A549 (cell line): ENCODE measurements at regions of chr3 and their contacts with region 1.

Region 1: DNA sequence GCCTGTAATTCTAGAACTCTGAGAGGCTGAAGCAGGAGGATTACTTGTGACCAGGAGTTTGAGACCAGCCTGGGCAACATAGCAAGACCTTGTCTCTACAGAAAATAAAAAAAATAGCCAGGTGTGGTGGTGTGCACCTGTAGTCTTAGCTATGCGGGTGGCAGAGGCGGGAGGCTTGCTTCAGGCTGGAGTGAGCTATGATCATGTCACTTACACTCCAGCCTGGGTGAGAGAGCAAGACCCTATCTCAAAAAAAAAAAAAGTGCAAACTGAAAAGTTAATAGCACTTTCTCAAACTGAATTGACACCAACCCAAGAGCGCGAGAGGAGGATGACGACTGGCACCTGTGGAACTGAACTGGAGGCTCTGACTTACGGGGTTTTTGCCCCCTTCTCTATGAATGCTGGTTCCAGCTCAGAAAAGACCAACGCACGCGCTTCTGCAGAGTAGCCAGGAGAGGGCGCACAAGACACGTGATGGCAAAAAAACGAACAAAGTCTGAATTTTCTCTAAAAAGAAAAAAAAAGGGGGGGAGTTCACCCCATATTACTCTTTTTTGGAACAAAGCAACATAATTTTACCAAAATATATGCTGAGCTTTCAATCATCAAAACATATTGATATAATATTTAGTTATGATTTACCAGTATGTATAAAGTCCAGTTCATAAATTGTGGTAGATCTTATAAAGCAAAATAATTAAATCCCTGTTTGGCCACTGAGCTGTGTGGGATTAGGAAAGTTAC is 23.7 kb downstream of the CFAP92 start:
- DNase-seq: peak in 1 of 2 experiments; percentile 37
- ATAC-seq: peak; percentile 62 to 78; a peak in 4 of 6 replicates
- H3K4me3 ChIP-seq: no peak overlapping the region
- H3K27ac ChIP-seq: no peak overlapping the region
- H3K4me1 ChIP-seq: no peaks in the 10 kb centered on the region
- CTCF ChIP-seq: peak; percentile 82
- EP300 ChIP-seq: no peak
- POLR2A ChIP-seq: no peak
- RAD21 ChIP-seq: peak; percentile 82 to 84

Region 2: DNA sequence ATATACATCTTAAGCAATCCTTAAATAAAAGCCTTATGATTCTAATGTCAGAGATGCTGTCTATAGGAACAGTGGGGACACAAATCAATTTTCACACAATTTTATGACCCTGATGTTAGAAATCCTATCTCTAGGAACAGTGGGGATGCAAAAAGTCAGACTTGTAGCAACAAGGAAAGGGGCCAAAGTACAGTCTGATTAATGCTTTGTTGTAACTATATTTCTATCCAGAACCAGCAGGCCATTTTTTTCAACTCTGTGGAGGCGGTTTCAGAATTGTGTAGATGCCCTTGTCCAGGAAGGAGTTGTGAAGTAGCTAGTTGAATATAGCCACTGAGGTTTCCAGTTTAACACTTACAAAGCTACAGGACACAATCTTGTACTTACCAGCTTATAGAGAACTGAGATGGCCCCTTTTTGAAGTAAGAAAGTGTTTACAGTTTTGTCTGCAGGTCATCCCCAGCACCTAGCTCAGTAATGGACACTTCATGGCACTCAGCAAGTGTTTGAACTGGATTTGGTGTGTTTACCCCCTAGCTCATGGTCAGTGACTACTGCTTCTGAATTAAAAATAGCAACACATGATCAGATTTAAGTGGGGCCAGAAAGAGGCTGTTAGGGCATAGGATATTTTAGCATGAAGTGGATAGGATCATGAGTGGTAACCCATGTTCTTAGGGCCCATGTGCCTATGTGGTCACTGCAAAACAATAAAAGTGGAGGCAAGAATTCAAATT is 189.9 kb before region 1 on chr3:
- CTCF ChIA-PET with region 1: no interaction called
- POLR2A ChIA-PET with region 1: no interaction called
- DNase-seq: no peak
- ATAC-seq: no peak
- H3K4me3 ChIP-seq: no peak overlapping the region
- H3K27ac ChIP-seq: no peak overlapping the region
- H3K4me1 ChIP-seq: peaks cover 44% of the 10 kb centered on the region
- CTCF ChIP-seq: no peak
- EP300 ChIP-seq: no peak
- POLR2A ChIP-seq: no peak
- RAD21 ChIP-seq: no peak

Region 3: GRCh38 chr3:128895843-128896697 is 74.1 kb before region 1 on chr3:
- CTCF ChIA-PET with region 1: no interaction called
- POLR2A ChIA-PET with region 1: no interaction called
- DNase-seq: no peak
- ATAC-seq: no peak
- H3K4me3 ChIP-seq: no peak overlapping the region
- H3K27ac ChIP-seq: peak overlapping the region in 1 of 2 experiments; percentile 45; a peak in 2 of 6 replicates
- H3K4me1 ChIP-seq: peaks cover 5% of the 10 kb centered on the region; the same call in 2 of the 3 replicates
- CTCF ChIP-seq: no peak
- EP300 ChIP-seq: no peak
- POLR2A ChIP-seq: no peak
- RAD21 ChIP-seq: no peak

Region 4: DNA sequence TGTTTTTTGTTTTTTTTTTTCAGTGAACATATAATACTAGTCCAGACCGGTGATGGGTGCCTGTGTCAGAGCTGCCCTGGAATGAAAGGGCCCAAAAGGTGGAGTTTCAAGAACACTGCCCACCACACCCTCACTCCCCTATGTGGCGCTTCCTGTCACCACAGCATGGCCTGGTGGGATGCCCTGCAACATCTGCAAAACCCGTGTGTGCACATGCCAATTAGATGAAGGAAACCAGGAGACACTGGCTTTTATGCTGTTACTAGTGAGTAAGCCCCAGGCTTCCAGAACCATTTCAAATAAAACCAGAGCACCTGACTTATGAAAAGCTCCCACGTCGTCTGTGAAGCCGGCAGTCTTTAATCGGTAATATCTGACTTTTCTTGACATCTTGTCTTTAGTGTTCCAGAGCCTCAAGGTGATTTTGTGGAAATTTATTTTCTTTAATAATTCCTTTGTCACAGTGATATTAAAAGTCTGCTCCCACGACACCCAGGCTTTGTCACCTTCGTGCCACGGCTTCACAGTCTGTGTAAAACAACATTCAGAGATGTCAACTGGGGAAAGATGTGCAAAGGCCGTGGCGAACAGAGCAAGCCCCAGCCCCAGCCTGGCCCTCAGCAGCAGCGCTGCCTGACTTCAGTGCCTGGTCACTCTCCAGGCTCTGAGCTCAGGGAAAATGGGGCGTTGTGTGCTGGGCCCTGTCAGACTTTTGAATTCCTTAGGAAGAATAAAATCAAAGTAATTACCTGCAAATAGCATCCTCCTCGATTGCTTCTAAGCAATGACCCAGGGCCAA is 17.3 kb after region 1 on chr3:
- CTCF ChIA-PET with region 1: interaction called, 27 read pairs
- POLR2A ChIA-PET with region 1: no interaction called
- DNase-seq: no peak
- ATAC-seq: no peak
- H3K4me3 ChIP-seq: no peak overlapping the region
- H3K27ac ChIP-seq: no peak overlapping the region
- H3K4me1 ChIP-seq: no peaks in the 10 kb centered on the region
- CTCF ChIP-seq: no peak
- EP300 ChIP-seq: no peak
- POLR2A ChIP-seq: no peak
- RAD21 ChIP-seq: no peak

Region 5: GRCh38 chr3:129016356-129016719 is 46.2 kb after region 1 on chr3:
- CTCF ChIA-PET with region 1: interaction called, 18 read pairs
- POLR2A ChIA-PET with region 1: no interaction called
- DNase-seq: no peak
- ATAC-seq: peak in 1 of 2 experiments; percentile 48; a peak in 2 of 6 replicates
- H3K4me3 ChIP-seq: no peak overlapping the region
- H3K27ac ChIP-seq: peak overlapping the region; percentile 56 to 75
- H3K4me1 ChIP-seq: peaks cover 16% of the 10 kb centered on the region
- CTCF ChIP-seq: no peak
- EP300 ChIP-seq: no peak
- POLR2A ChIP-seq: no peak
- RAD21 ChIP-seq: no peak

Region 6: GRCh38 chr3:129052675-129053074 is 82.5 kb after region 1 on chr3:
- CTCF ChIA-PET with region 1: interaction called, 23 read pairs
- POLR2A ChIA-PET with region 1: no interaction called
- DNase-seq: no peak
- ATAC-seq: no peak
- H3K4me3 ChIP-seq: no peak overlapping the region
- H3K27ac ChIP-seq: no peak overlapping the region
- H3K4me1 ChIP-seq: 0 out of 3 replicates have a peak, but pooled peaks cover 3% of the 10 kb centered on the region
- CTCF ChIP-seq: no peak
- EP300 ChIP-seq: no peak
- POLR2A ChIP-seq: no peak
- RAD21 ChIP-seq: no peak

Region 7: GRCh38 chr3:129095285-129095684 is 125.1 kb after region 1 on chr3:
- CTCF ChIA-PET with region 1: interaction called, 10 read pairs
- POLR2A ChIA-PET with region 1: no interaction called
- DNase-seq: no peak
- ATAC-seq: no peak
- H3K4me3 ChIP-seq: no peak overlapping the region
- H3K27ac ChIP-seq: no peak overlapping the region
- H3K4me1 ChIP-seq: no peaks in the 10 kb centered on the region
- CTCF ChIP-seq: no peak
- EP300 ChIP-seq: no peak
- POLR2A ChIP-seq: no peak
- RAD21 ChIP-seq: no peak

Region 8: GRCh38 chr3:129160891-129161859 is 191.0 kb after region 1 on chr3 and contains the start of gene ISY1:
- CTCF ChIA-PET with region 1: interaction called, 10 read pairs
- POLR2A ChIA-PET with region 1: interaction called, 7 read pairs
- DNase-seq: peak; percentile 91 to 95
- ATAC-seq: peak; percentile 87 to 89
- H3K4me3 ChIP-seq: peak within 1 kb of the TSS; percentile 85
- H3K27ac ChIP-seq: peak within 1 kb of the TSS; percentile 95 to 100
- H3K4me1 ChIP-seq: peaks cover 16% of the 10 kb centered on the region; the same call in 2 of the 3 replicates
- CTCF ChIP-seq: peak; percentile 58
- EP300 ChIP-seq: no peak
- POLR2A ChIP-seq: peak; percentile 36; the same call in 1 of the 2 replicates
- RAD21 ChIP-seq: peak; percentile 32 to 42; a peak in 3 of 5 replicates
- polyA plus RNA-seq, gene ISY1: 21.3 and 27.6 TPM in 2 replicates

Region 9: DNA sequence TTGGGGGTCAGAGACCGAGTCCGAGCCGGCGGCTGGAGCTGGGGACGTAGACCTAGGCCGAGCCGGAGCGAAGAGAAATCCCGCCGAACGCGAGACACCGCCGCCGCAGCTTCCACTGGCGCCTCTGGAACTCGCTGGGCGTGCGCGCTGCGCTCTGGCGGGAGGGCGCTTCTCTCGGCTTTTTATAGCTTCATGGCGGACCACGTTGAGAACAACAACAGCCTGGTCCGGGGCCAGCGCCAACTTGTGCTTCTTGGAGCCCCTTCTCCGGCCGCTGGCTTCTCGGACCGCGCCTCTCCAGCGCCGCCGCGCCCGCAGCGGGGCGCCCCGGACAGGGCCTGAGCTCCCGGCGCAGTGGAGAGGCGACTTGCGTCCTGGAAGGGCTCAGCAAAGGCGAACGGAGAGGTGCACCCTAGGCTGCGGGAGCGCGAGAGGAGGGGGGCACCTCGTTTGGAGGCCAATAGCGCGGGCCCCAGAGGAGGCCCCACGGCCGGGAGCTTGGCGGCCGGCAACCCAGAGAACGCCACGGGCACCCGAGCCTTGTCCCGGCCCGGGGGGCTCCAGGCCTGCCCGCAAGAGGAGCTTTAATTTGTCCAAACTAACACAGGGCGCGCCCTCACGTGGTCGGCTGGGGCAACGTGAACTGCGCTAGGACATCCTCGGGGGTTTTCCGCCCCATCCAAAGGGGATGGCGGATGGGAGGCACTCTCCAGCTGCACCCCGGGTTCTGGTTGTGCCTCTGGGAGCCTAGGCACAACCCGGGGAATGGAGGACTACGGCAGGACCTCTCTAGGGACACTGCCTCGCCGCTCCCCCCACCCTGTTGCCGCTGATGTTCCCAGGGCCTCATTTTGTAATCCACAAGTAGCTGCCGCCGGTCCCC is 346.2 kb after region 1 on chr3:
- CTCF ChIA-PET with region 1: interaction called, 13 read pairs
- POLR2A ChIA-PET with region 1: interaction called, 6 read pairs
- DNase-seq: peak; percentile 78 to 82
- ATAC-seq: peak; percentile 25 to 63; a peak in 4 of 6 replicates
- H3K4me3 ChIP-seq: peak overlapping the region; percentile 97
- H3K27ac ChIP-seq: peak overlapping the region; percentile 93 to 99
- H3K4me1 ChIP-seq: peaks cover 15% of the 10 kb centered on the region
- CTCF ChIP-seq: peak; percentile 59
- EP300 ChIP-seq: no peak
- POLR2A ChIP-seq: peak; percentile 99
- RAD21 ChIP-seq: peak; percentile 28 to 31; a peak in 2 of 5 replicates